Breast epithelium (tissue), 4 donors: ENCODE measurements at regions of chr20 and their contacts with region 1.

Region 1: GRCh38 chr20:18224968-18225568 is 63.3 kb upstream of the ZNF133 start:
- DNase-seq: peak in 1 of 2 donors; percentile 20
- H3K4me3 ChIP-seq: no peak overlapping the region
- H3K27ac ChIP-seq: peak overlapping the region; percentile 11 to 19
- H3K4me1 ChIP-seq: peaks cover 0 to 12% of the 10 kb centered on the region in 2 donors
- H3K27me3 ChIP-seq: no peaks in the 10 kb centered on the region
- CTCF ChIP-seq: no peak
- POLR2A ChIP-seq: no peak

Region 2: DNA sequence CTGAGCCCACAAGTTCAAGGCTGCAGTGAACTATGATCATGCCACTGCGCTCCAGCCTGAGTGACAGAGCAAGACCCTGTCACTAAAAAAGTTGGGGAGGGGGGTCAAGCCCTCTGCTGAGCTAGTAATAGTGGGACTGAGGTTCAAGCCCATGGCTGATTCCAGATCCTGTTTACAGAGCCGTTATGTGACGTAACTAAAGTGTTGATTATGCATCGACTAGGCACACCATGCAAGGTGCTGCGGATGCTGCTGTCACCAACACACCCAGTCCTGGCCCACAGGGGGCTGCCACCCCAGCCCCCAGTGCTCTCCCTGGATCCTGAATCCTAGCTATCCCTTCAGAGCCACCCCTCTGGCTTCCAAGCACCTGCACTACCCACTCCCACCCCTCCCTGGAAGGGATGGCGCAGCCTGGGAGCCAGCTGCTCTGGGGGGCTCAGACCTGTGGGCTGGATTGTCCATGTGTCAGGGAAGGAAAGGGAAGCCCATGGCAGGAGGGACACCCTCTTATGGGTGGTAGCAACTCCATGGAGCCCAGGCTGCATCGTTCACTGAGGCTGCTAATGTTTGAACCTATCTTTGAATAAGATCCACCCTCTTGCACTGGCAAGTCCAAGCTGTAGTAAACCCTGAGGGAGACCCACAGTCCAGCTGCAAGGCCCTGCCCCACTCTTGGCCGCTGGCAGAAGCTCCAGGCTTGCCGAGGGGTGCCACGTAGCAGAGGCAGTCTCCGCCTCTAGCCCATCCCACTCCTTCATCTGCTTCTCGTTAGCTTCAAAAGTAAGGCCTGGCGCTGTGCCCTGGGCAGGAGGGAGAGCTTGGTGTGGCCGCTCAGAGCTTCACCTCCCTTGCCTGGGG is 351.4 kb before region 1 on chr20:
- intact Hi-C with region 1: loop called (anchors 5 kb)
- DNase-seq: peak; percentile 85 to 87
- H3K4me3 ChIP-seq: peak overlapping the region in 2 of 3 donors; percentile 2 to 13
- H3K27ac ChIP-seq: peak overlapping the region; percentile 87 to 91
- H3K4me1 ChIP-seq: peaks cover 9 to 21% of the 10 kb centered on the region in 2 donors
- H3K27me3 ChIP-seq: no peaks in the 10 kb centered on the region
- CTCF ChIP-seq: no peak
- POLR2A ChIP-seq: no peak

Region 3: GRCh38 chr20:18324596-18325089 is 99.6 kb after region 1 on chr20:
- intact Hi-C with region 1: loop called (anchors 5 kb)
- DNase-seq: no peak
- H3K4me3 ChIP-seq: no peak overlapping the region
- H3K27ac ChIP-seq: no peak overlapping the region
- H3K4me1 ChIP-seq: no peaks in the 10 kb centered on the region
- H3K27me3 ChIP-seq: no peaks in the 10 kb centered on the region
- CTCF ChIP-seq: no peak
- POLR2A ChIP-seq: no peak